Adrenal gland (tissue), 19 donors: ENCODE measurements at regions of chr7 and their contacts with region 1.

Region 1: GRCh38 chr7:31735991-31736982 is 49.3 kb downstream of the PPP1R17 start:
- DNase-seq: peak; percentile 46 to 87 (median 68)
- H3K4me3 ChIP-seq: no peak overlapping the region
- H3K27ac ChIP-seq: no peak overlapping the region
- H3K4me1 ChIP-seq: no peaks in the 10 kb centered on the region
- H3K27me3 ChIP-seq: no peaks in the 10 kb centered on the region
- CTCF ChIP-seq: peak; percentile 77 to 93 (median 88)
- POLR2A ChIP-seq: no peak

Region 2: GRCh38 chr7:31134246-31135188 is 601.8 kb before region 1 on chr7:
- intact Hi-C with region 1: loop called in 1 of 2 experiments (anchors 10 kb)
- DNase-seq: peak; percentile 60 to 84 (median 75)
- H3K4me3 ChIP-seq: no peak overlapping the region
- H3K27ac ChIP-seq: no peak overlapping the region
- H3K4me1 ChIP-seq: no peaks in the 10 kb centered on the region
- H3K27me3 ChIP-seq: no peaks in the 10 kb centered on the region
- CTCF ChIP-seq: peak; percentile 59 to 83 (median 74)
- POLR2A ChIP-seq: no peak

Region 3: DNA sequence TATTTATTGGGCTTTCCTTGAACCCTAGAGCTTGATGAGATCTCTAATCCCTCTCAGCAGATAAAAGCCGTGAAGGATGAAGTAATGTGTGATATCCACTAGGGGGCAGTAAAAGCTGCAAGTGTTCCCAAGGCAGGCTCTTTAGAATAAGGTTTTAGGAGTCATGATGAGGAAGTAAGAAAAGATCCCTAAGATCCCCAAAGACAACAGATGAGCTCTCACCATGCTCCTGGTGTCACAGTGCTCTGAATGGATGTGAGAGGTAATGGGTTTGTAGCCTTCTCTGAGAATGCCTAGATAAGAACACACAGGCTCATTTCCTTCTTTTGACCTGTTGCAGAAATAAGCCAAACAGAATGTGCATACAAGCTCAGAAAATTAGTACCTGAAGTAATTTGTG is 292.8 kb before region 1 on chr7:
- intact Hi-C with region 1: loop called (anchors 5 to 10 kb)
- DNase-seq: peak in 2 of 7 donors; percentile 6 to 22
- H3K4me3 ChIP-seq: no peak overlapping the region
- H3K27ac ChIP-seq: no peak overlapping the region
- H3K4me1 ChIP-seq: no peaks in the 10 kb centered on the region
- H3K27me3 ChIP-seq: no peaks in the 10 kb centered on the region
- CTCF ChIP-seq: peak; percentile 49 to 85 (median 70)
- POLR2A ChIP-seq: no peak

Region 4: DNA sequence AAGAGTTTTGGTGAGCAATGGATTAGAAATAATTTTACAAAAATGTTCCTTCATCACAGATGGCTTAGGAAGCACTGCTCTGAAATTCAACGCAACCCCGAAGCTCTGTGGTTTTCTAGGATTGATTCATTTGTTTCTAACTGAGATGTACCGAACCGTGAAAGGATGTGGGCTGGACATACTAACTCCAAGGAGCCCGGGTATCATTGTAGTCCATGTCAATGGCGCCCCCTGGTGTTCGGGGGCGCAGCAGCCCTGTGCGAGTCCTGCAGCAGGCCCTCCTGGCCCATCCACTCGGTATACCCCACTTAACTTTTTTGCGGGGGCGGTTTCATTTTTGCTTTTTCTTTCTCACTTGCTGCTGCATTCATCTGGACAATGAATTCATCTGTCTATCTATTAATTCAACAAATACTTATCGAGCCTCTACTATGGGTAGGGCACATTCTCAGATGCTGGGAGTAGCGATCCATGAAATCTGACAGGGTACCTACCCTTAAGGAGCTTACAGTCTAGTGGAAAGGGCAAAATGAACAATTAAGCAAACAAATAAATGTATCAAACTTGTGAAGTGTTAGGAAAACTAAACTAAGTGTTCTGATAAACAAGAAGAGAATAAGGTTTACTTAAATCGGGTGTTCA is 247.6 kb before region 1 on chr7:
- intact Hi-C with region 1: no loop called
- DNase-seq: peak; percentile 24 to 62 (median 35)
- H3K4me3 ChIP-seq: no peak overlapping the region
- H3K27ac ChIP-seq: no peak overlapping the region
- H3K4me1 ChIP-seq: no peaks in the 10 kb centered on the region
- H3K27me3 ChIP-seq: no peaks in the 10 kb centered on the region
- CTCF ChIP-seq: peak in 5 of 6 experiments; percentile 37 to 55 (median 44)
- POLR2A ChIP-seq: no peak

Region 5: GRCh38 chr7:31648288-31648687 is 88.0 kb before region 1 on chr7:
- intact Hi-C with region 1: loop called (anchors 5 to 10 kb)
- DNase-seq: no peak
- H3K4me3 ChIP-seq: no peak overlapping the region
- H3K27ac ChIP-seq: no peak overlapping the region
- H3K4me1 ChIP-seq: no peaks in the 10 kb centered on the region
- H3K27me3 ChIP-seq: no peaks in the 10 kb centered on the region
- CTCF ChIP-seq: peak in 3 of 6 experiments; percentile 29 to 34 (median 30)
- POLR2A ChIP-seq: no peak